Posterior vena cava (tissue), 2 donors: ENCODE measurements at regions of chr14 and their contacts with region 1.

Region 1: DNA sequence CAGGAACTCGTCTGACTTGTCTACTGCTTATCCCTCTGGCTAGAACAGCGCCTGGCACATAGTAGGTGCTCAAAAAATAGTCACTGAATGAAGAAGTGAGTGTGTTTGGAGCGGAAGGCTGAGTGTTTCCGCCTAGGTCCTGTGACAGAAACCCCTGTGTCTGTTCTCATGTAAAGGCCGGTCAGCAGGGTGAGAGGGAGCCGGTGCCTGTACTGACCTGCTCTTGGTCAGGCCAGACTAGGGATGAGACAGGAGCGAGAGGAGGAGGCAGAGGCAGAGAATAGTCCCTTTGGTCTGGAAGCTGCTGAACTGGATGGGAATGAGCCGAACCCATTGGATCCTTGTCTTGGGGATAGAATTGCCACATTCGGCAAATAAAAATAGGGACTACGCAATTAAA is 20.6 kb downstream of the VRTN start:
- DNase-seq: peak; percentile 37

Region 2: DNA sequence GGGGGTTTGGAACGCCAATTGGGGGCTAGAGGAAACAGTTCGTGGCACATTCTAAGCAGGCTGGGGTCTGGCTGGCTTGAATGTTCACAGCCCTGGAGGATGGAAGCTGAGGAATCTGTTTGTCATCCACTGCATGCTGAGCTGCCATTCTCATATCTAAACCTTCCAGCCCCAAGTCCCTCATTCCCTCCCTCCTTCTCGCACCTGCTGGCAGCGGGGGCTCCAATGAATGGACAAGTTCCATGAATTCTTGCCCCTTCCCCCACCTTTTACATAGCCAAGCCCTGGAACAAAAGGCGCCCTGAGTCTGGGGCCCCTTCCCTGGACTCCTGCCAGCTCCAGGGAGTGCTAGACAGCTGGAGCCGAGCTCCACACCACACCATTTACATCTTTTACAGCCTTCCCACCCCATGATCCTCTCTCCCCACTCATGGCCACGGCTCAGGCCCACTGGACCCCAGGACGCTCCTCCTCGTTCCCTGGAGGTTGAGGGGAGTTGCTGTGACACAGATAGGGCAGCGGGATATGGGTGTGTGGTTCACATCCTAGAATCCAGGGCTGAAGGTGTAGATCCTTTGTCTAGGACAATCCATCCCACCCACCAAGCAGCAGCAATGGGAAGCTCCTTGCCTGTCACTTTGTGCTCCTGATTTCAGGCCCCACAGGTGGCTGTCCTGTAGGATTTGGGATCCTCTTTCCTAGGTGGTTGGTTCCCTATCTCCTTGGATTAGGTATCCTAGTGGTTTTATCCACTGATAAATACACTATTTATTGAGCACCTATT is 42.3 kb before region 1 on chr14:
- intact Hi-C with region 1: no loop called
- DNase-seq: no peak

Region 3: GRCh38 chr14:74421981-74422380 is 53.1 kb after region 1 on chr14:
- intact Hi-C with region 1: loop called in 1 of 2 experiments (anchors 1 kb)
- DNase-seq: no peak